Activated CD4-positive, alpha-beta T cell treated with anti-CD3 and anti-CD28 coated beads for 36 hours (primary cell): ENCODE measurements at regions of chr3 and their contacts with region 1.

Region 1: GRCh38 chr3:197136744-197137143 is 107.1 kb upstream of the MELTF start:
- DNase-seq: no peak
- ATAC-seq: no peak
- H3K4me3 Mint-ChIP-seq: no peak overlapping the region
- H3K27ac Mint-ChIP-seq: no peak overlapping the region
- H3K4me1 Mint-ChIP-seq: peaks cover 11% of the 10 kb centered on the region
- H3K27me3 Mint-ChIP-seq: no peaks in the 10 kb centered on the region

Region 2: GRCh38 chr3:196670339-196670738 is 466.4 kb before region 1 on chr3:
- CTCF ChIA-PET with region 1: no interaction called
- POLR2A ChIA-PET with region 1: no interaction called
- intact Hi-C with region 1: no loop called
- DNase-seq: no peak
- ATAC-seq: no peak
- H3K4me3 Mint-ChIP-seq: no peak overlapping the region
- H3K27ac Mint-ChIP-seq: peak overlapping the region; percentile 64
- H3K4me1 Mint-ChIP-seq: peaks cover 13% of the 10 kb centered on the region
- H3K27me3 Mint-ChIP-seq: no peaks in the 10 kb centered on the region

Region 3: GRCh38 chr3:197093871-197094270 is 42.9 kb before region 1 on chr3:
- CTCF ChIA-PET with region 1: interaction called, 4 read pairs
- POLR2A ChIA-PET with region 1: no interaction called
- intact Hi-C with region 1: loop called in 1 of 2 experiments (anchors 1 kb)
- DNase-seq: no peak
- ATAC-seq: no peak
- H3K4me3 Mint-ChIP-seq: no peak overlapping the region
- H3K27ac Mint-ChIP-seq: no peak overlapping the region
- H3K4me1 Mint-ChIP-seq: peaks cover 3% of the 10 kb centered on the region
- H3K27me3 Mint-ChIP-seq: no peaks in the 10 kb centered on the region

Region 4: GRCh38 chr3:197709135-197709534 is 572.4 kb after region 1 on chr3:
- CTCF ChIA-PET with region 1: no interaction called
- POLR2A ChIA-PET with region 1: no interaction called
- intact Hi-C with region 1: no loop called
- DNase-seq: no peak
- ATAC-seq: no peak
- H3K4me3 Mint-ChIP-seq: no peak overlapping the region
- H3K27ac Mint-ChIP-seq: no peak overlapping the region
- H3K4me1 Mint-ChIP-seq: peaks cover 27% of the 10 kb centered on the region
- H3K27me3 Mint-ChIP-seq: no peaks in the 10 kb centered on the region